GM12878 (cell line): ENCODE measurements at regions of chr13 and their contacts with region 1.

Region 1: DNA sequence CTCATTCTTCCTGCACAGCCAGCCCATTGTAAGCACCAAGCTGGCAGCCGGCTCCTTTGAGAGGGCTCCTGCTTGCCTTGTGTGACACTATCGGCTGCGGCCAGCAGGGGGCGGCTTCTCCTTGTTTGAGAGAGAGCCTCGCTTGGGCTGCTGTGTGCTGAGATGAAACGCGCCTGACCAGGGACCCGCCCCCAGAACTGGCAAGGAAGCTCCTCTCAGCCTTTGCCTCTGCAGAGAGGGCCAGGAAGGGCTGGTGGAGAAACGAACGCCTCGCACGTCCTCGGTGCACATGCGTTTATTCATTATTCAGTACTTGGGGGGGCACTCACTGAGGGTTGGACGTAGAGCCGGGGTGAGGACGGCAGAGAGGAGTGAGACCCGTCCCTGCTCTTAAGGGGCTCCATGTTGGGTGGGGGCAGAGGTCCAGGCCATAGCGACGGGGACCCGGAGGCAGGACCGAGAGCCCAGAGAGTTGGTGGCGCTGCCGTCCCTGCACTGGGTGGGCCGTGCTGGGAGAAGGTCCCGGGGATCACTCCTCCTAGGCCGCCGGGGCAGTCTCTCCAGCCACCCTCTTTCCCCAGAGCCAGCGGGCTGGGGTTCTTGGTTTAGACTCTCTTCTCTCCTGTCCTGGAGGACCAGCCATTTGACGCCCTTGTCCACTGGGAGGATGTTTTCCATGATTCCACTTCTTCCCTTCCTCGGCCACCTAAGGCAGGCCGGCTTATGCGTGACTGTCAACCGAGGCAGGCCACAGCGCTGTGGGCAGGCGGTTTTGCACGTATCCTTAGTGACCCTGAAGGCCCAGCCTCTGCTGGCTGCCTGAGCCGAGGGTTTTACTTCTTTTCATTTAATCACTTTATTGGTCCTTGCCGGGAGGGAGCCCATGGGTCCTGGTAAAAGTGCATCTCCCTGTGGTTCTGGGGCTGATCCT is 174.5 kb downstream of the KATNAL1 start:
- DNase-seq: no peak
- ATAC-seq: peak; percentile 99
- H3K4me3 ChIP-seq: no peak overlapping the region
- H3K27ac ChIP-seq: no peak overlapping the region
- H3K4me1 ChIP-seq: no peaks in the 10 kb centered on the region
- H3K27me3 ChIP-seq: no peaks in the 10 kb centered on the region
- CTCF ChIP-seq: peak; percentile 89 to 95 (median 94)
- EP300 ChIP-seq: 0 out of 4 replicates have a peak, but pooled peaks of 1 of the 2 experiments have one; percentile 10
- POLR2A ChIP-seq: no peak
- RAD21 ChIP-seq: peak; percentile 97

Region 2: DNA sequence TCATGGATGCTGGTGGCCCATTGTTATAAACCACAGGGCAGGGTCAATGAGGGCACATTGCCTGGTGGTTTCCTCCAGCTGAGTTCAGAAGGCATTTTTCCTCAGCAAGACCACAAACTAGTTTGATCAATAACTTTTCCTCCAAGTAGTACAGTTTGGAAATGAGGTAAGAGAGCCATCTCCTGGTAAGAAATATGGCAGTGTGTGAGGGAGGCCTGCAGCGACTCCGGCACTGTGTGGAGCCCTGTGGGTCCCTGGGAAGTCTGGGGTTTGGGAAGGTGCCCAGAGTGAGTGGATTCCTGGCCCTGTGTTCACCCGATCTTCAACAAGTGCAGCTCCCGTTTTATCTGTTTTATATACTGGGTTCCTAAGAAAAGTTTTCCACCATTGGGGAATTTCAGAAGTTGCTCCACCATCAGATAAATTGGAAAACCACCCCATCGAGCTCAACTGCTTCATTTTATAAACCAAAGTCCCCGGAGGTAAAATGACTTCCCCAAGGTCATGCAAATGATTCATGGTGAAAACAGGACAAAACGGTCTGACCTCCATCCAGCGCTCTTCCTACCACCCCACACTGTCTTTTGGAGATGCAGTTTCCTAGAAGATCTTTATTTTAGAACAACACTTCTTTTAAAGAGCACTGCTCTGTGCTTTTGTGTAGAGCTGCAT is 26.0 kb after region 1 on chr13:
- CTCF ChIA-PET with region 1: interaction called, 93 read pairs
- POLR2A ChIA-PET with region 1: interaction called, 3 read pairs
- RAD21 ChIA-PET with region 1: interaction called, 82 read pairs
- SMC1A ChIA-PET with region 1: interaction called, 64 read pairs
- in situ Hi-C with region 1: no loop called
- intact Hi-C with region 1: loop called (anchors 1 kb)
- DNase-seq: no peak
- ATAC-seq: peak; percentile 61
- H3K4me3 ChIP-seq: no peak overlapping the region
- H3K27ac ChIP-seq: 0 out of 2 replicates have a peak overlapping the region, but pooled peaks have one; percentile 1
- H3K4me1 ChIP-seq: peaks cover 33% of the 10 kb centered on the region
- H3K27me3 ChIP-seq: no peaks in the 10 kb centered on the region
- CTCF ChIP-seq: peak in 2 of 3 experiments; percentile 33 to 40; a peak in 4 of 6 replicates
- EP300 ChIP-seq: no peak
- POLR2A ChIP-seq: no peak
- RAD21 ChIP-seq: peak; percentile 68

Region 3: DNA sequence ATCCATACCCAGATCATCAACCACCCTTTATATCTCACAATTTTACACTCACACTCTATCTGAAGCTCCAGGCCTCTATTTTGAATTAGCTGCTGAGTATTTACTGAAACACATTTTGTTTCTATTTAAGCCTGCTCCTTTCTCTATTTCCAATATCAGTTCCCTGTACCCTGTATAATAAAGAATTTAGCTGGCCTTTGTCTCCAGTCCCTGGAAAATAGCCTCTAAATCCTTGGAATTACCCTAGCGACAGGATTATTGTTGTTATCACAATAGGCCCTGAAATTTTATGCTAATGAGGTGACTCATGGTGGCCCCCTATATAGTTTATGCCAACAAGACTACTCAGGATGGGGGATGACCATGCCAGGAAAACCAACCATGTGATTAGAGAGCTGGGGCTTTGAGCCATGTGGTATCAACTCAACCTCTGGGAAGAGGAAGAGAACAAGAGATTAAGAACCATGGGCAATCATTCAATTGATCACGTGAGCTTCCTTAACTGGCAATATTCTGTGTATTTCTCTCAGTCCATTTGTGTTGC is 101.8 kb after region 1 on chr13:
- CTCF ChIA-PET with region 1: interaction called, 4 read pairs
- POLR2A ChIA-PET with region 1: no interaction called
- RAD21 ChIA-PET with region 1: no interaction called
- SMC1A ChIA-PET with region 1: interaction called, 3 read pairs
- in situ Hi-C with region 1: no loop called
- intact Hi-C with region 1: loop called (anchors 5 kb)
- DNase-seq: no peak
- ATAC-seq: no peak
- H3K4me3 ChIP-seq: no peak overlapping the region
- H3K27ac ChIP-seq: no peak overlapping the region
- H3K4me1 ChIP-seq: no peaks in the 10 kb centered on the region
- H3K27me3 ChIP-seq: no peaks in the 10 kb centered on the region
- CTCF ChIP-seq: no peak
- EP300 ChIP-seq: no peak
- POLR2A ChIP-seq: no peak
- RAD21 ChIP-seq: no peak

Region 4: GRCh38 chr13:30334663-30335386 is 201.9 kb after region 1 on chr13:
- CTCF ChIA-PET with region 1: interaction called, 94 read pairs
- POLR2A ChIA-PET with region 1: no interaction called
- RAD21 ChIA-PET with region 1: interaction called, 22 read pairs
- SMC1A ChIA-PET with region 1: interaction called, 16 read pairs
- in situ Hi-C with region 1: loop called (anchors 5 kb)
- intact Hi-C with region 1: loop called (anchors 1 kb)
- DNase-seq: no peak
- ATAC-seq: peak; percentile 85
- H3K4me3 ChIP-seq: no peak overlapping the region
- H3K27ac ChIP-seq: no peak overlapping the region
- H3K4me1 ChIP-seq: no peaks in the 10 kb centered on the region
- H3K27me3 ChIP-seq: no peaks in the 10 kb centered on the region
- CTCF ChIP-seq: peak; percentile 52 to 59 (median 58); a peak in 5 of 6 replicates
- EP300 ChIP-seq: no peak
- POLR2A ChIP-seq: no peak
- RAD21 ChIP-seq: peak; percentile 68

Region 5: DNA sequence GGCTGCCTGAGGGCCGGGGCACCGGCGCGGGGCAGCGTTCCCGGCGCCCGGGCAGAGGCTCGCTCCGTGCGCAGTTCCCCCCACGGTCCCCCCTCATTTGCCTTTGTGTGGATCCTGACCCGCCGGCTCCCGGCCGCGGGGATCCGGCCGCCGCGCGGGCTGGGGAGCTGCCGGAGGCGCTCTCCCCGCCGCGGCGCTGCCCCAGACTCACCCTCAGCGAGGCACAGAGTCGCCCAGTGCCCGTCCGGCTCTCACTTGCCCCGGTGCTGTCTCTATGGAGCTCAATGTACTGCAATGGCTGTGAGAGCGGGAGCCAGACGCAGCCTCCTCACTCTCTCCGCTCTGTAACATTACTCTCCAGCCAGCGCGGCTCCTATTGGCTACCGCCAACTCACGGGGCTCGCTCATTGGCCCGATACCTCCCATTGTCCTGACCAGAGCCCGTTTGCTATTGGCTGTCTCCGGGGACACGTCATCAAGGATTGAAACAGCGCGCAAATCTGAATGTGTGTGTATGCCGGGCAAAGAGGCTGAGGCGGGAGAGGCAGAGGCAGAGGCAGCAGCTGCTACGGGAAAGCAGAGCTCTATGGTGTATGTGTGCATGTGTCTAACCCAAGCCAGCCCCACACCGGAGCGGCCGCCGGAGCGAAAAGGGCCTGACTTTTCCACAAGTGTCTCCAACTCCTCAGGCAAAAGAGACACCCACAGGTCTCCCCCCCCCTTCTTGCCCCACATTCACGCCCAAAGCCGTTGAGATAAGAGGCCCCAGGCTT is 332.9 kb after region 1 on chr13 and contains the start of gene HMGB1:
- CTCF ChIA-PET with region 1: interaction called, 33 read pairs
- POLR2A ChIA-PET with region 1: interaction called, 3 read pairs
- RAD21 ChIA-PET with region 1: interaction called, 24 read pairs
- SMC1A ChIA-PET with region 1: interaction called, 31 read pairs
- in situ Hi-C with region 1: no loop called
- intact Hi-C with region 1: loop called (anchors 5 kb)
- DNase-seq: peak; percentile 97
- ATAC-seq: peak; percentile 93
- H3K4me3 ChIP-seq: peak within 1 kb of the TSS; percentile 82
- H3K27ac ChIP-seq: peak within 1 kb of the TSS; percentile 97
- H3K4me1 ChIP-seq: 0 out of 2 replicates have a peak, but pooled peaks cover 10% of the 10 kb centered on the region
- H3K27me3 ChIP-seq: no peaks in the 10 kb centered on the region
- CTCF ChIP-seq: no peak
- EP300 ChIP-seq: no peak
- POLR2A ChIP-seq: peak; percentile 96
- RAD21 ChIP-seq: no peak
- polyA plus RNA-seq, gene HMGB1: 2,416 to 2,529 TPM